ENCODE measurements at regions of chr18 and their contacts with region 1.

Region 1: DNA sequence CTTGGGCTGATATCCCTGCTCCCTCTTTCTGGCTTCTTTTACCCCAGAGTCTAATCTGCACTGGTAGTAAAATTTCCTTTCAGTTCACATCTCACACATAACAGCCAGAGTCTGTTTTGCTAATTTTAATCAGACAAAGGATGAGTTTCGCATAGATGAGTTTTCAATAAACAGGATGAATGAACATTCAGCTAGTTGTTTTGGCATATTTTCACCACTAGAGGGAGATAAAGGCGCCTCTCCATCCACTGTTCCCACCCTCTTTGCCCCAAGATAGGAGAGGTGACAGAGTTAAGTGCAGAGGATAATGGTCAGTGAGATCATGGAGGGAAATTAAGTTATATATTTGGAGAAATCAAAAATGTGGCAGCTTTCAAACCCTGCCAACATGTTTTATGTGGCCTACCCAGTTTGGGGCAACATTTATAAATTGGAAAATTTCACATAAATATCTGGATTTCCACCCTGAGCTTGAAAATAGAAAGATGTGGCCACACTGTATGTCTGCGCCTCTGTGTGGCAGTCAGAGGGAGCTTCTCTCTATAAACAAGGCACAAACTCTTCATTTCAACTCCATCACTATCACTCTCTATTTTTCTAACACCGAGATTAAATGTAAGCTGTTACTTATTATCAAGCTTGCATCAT is 48.5 kb upstream of the DTNA start:
- DNase-seq: peak; percentile 42
- CTCF ChIP-seq: peak; percentile 70

Region 2: GRCh38 chr18:34611904-34612303 is 49.7 kb before region 1 on chr18:
- CTCF ChIA-PET with region 1: interaction called, 13 read pairs
- POLR2A ChIA-PET with region 1: no interaction called
- DNase-seq: no peak
- CTCF ChIP-seq: no peak

Region 3: DNA sequence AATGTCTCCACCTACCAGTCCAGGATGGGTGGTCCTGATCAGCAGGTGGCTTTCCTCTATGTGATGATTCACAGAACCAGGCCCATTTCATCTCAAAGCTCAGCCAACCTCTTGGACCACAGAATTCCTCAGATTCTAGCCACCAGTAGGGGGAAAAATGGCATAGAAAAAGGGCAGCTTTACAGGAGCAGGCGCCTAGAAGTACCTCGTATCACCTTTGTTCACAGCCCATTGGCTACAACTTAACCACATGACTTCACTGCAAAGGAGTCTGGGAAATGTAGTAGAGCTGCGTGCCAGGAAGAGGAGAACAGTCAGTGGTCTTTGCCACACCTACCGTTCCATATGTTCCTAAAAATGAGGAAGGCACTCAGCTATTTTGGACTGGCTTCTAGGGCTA is 14.3 kb before region 1 on chr18:
- CTCF ChIA-PET with region 1: interaction called, 42 read pairs
- POLR2A ChIA-PET with region 1: no interaction called
- DNase-seq: no peak
- CTCF ChIP-seq: no peak

Region 4: DNA sequence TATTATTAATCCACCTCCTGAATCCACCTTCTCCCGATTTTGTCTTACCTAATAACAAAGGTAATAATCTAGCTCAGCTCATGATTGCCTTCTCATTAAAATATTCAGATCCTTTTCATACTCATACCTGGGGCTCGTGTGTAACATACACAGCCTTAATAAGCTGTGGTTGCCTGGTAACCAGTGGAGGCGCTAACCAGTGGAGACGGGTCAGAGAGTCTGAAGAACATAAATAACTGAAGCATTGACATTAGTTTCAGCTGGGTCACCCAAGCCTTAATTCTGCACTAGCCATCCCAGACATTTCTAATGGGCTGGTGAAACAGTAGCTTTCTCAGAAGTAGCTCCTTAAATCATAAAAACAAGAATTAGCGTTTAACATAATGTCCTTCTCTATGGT is 33.7 kb after region 1 on chr18:
- CTCF ChIA-PET with region 1: interaction called, 11 read pairs
- POLR2A ChIA-PET with region 1: no interaction called
- DNase-seq: no peak
- CTCF ChIP-seq: no peak

Measured in GM10248 (cell line).